ENCODE measurements at regions of chr3 and their contacts with region 1.

Region 1: GRCh38 chr3:160686955-160687535 is 10.1 kb downstream of the ARL14 start:
- DNase-seq: no peak
- ATAC-seq: no peak
- H3K4me3 Mint-ChIP-seq: no peak overlapping the region
- H3K27ac Mint-ChIP-seq: no peak overlapping the region
- H3K4me1 Mint-ChIP-seq: no peaks in the 10 kb centered on the region
- H3K27me3 Mint-ChIP-seq: peaks cover 2% of the 10 kb centered on the region

Region 2: GRCh38 chr3:160676547-160677303 is 10.3 kb before region 1 on chr3 and contains the start of gene ARL14:
- CTCF ChIA-PET with region 1: interaction called, 11 read pairs
- POLR2A ChIA-PET with region 1: no interaction called
- intact Hi-C with region 1: no loop called
- DNase-seq: no peak
- ATAC-seq: peak; percentile 55
- H3K4me3 Mint-ChIP-seq: no peak within 1 kb of the TSS
- H3K27ac Mint-ChIP-seq: no peak within 1 kb of the TSS
- H3K4me1 Mint-ChIP-seq: no peaks in the 10 kb centered on the region
- H3K27me3 Mint-ChIP-seq: peaks cover 10% of the 10 kb centered on the region
- total RNA-seq, gene ARL14: not detected

Region 3: DNA sequence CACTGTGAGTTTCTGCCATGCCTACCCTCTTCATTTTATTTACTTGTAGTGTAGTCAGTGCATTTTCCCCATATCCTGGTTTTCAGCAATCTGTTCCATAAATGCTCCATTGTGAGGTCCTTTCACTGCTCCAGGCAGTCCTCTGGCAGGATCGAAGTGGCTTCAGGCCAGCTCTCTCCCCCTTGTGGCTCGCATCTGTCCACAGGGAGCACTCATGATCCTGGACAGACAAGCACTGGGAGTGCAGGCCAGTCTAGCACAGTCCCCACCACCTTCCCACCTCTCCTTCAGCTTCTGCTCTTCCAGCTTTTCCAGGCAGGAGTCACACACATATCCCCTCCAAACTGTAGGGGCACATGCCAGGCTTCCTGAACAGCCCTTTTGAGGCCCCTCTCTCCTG is 242.6 kb after region 1 on chr3:
- CTCF ChIA-PET with region 1: interaction called, 12 read pairs
- POLR2A ChIA-PET with region 1: no interaction called
- intact Hi-C with region 1: no loop called
- DNase-seq: no peak
- ATAC-seq: no peak
- H3K4me3 Mint-ChIP-seq: no peak overlapping the region
- H3K27ac Mint-ChIP-seq: no peak overlapping the region
- H3K4me1 Mint-ChIP-seq: no peaks in the 10 kb centered on the region
- H3K27me3 Mint-ChIP-seq: peaks cover 2% of the 10 kb centered on the region